GM23248 (cell line): ENCODE measurements at regions of chr7 and their contacts with region 1.

Region 1: GRCh38 chr7:76011442-76011861 is 17.1 kb upstream of the TMEM120A start:
- DNase-seq: peak; percentile 76
- H3K4me3 ChIP-seq: no peak overlapping the region
- H3K27ac ChIP-seq: peak overlapping the region; percentile 55
- H3K4me1 ChIP-seq: peaks cover 10% of the 10 kb centered on the region; the same call in 1 of the 2 replicates
- H3K27me3 ChIP-seq: no peaks in the 10 kb centered on the region

Region 2: DNA sequence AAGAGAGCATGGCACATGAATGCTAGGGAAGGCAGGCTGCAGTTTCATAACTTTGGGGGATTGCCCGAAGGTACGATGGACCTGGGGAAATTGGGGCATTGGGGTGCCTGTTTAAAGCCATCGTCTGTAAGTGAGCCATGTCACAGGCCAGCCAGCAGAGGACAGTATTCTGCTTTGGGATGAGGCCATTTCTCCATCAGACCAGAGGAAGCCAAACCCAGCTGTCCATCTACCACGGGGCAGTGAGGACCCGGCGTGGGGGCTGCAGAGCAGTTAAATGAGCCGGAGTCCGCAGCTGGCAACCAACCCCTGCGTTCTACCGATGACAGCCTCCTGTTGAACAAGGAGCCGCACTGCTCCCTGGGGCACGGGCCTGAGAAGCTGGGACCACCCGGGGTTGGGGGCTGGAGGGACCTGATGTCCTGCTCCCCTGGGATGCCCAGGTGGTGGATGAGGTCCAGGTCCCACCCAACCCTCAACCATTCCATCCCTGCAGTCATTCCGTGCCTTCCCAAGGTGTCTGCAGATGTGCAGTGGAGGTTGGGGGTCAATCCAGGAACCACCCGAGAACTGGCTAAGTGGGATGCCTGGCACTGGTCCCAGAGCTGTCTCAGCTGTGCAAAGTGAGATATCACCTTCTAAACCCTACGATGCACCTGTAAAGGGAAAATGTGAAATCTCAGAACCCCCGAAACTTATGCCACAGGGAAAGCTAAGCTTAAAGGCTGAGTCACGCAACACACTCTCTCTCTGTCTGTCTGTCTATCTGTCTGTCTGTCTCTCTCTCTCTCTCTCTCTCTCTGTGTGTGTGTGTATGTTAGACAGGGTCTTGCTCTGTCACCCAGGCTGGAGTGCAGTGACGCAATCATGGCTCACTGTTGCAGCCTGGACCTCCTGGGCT is 144.7 kb before region 1 on chr7:
- in situ Hi-C with region 1: loop called (anchors 10 kb)
- DNase-seq: peak; percentile 77
- H3K4me3 ChIP-seq: no peak overlapping the region
- H3K27ac ChIP-seq: no peak overlapping the region
- H3K4me1 ChIP-seq: no peaks in the 10 kb centered on the region
- H3K27me3 ChIP-seq: no peaks in the 10 kb centered on the region